ENCODE measurements at regions of chr2 and their contacts with region 1.

Region 1: GRCh38 chr2:16713011-16713423 is 47.4 kb upstream of the CYRIA start:
- DNase-seq: no peak
- ATAC-seq: peak; percentile 80
- H3K4me3 Mint-ChIP-seq: peak overlapping the region; percentile 72
- H3K27ac Mint-ChIP-seq: peak overlapping the region; percentile 90
- H3K4me1 Mint-ChIP-seq: peaks cover 58% of the 10 kb centered on the region
- H3K27me3 Mint-ChIP-seq: no peaks in the 10 kb centered on the region
- CTCF ChIP-seq: no peak

Region 2: GRCh38 chr2:16346671-16347070 is 366.3 kb before region 1 on chr2:
- CTCF ChIA-PET with region 1: no interaction called
- POLR2A ChIA-PET with region 1: no interaction called
- intact Hi-C with region 1: no loop called
- DNase-seq: no peak
- ATAC-seq: no peak
- H3K4me3 Mint-ChIP-seq: no peak overlapping the region
- H3K27ac Mint-ChIP-seq: no peak overlapping the region
- H3K4me1 Mint-ChIP-seq: no peaks in the 10 kb centered on the region
- H3K27me3 Mint-ChIP-seq: no peaks in the 10 kb centered on the region
- CTCF ChIP-seq: no peak

Region 3: DNA sequence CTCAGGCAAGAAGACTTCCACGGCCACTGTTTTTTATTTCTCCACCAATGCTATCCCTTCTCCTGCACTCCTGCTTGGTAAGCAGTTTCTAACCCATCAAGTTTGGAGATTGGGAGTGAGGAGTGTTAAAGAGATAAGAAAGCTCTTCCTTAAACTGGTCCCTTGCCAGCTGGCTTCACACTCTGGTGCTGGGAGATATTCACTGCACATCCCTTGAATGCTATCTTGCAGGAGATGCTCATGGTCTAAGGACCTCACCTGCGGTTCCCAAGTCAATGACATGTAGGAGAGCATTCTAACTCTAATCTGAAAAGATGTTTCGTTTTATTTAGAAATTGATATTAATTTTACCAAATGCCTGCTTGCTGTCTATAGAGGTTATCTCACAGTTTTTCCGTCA is 19.2 kb before region 1 on chr2:
- CTCF ChIA-PET with region 1: no interaction called
- POLR2A ChIA-PET with region 1: no interaction called
- intact Hi-C with region 1: loop called (anchors 2 kb)
- DNase-seq: no peak
- ATAC-seq: no peak
- H3K4me3 Mint-ChIP-seq: no peak overlapping the region
- H3K27ac Mint-ChIP-seq: no peak overlapping the region
- H3K4me1 Mint-ChIP-seq: peaks cover 9% of the 10 kb centered on the region
- H3K27me3 Mint-ChIP-seq: no peaks in the 10 kb centered on the region
- CTCF ChIP-seq: no peak

Region 4: DNA sequence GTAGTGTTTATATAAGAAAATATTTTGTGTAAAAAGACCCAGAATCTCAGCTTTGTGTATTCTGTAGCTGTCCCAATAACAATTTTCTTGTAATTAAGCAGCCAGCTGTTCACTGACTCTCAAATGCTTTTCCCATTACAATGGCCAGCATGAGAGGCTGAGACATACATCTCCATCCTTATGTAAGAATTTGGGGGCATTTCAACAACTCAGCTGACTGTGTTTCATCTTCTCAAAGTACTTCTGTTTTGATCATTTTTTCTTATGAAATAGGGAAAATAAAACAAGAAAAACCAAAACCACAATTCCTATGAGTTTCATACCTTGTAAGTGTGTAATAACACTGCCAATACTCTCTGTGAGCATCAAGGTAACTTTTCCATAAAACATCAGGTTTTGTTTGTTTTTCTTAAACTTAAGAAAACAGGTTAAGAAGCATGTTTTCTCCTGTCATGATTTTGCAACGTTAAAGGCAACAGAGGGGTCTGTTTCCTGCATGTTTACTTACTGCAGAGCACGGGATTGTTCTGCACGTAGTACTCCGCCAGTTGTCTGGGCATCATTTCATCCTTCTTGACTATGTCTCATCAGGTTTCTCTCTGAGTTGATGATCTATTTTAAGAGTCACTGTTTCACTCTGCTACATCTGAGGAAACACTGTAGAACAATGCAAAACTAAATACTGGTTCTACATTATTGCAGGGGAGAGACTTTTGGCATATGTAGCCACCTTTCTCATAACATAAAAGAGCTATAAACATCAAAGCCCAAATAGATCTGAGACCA is 15.5 kb after region 1 on chr2:
- CTCF ChIA-PET with region 1: no interaction called
- POLR2A ChIA-PET with region 1: interaction called, 4 read pairs
- intact Hi-C with region 1: loop called (anchors 1 kb)
- DNase-seq: no peak
- ATAC-seq: peak; percentile 35
- H3K4me3 Mint-ChIP-seq: peak overlapping the region; percentile 25
- H3K27ac Mint-ChIP-seq: peak overlapping the region; percentile 51
- H3K4me1 Mint-ChIP-seq: peaks cover 39% of the 10 kb centered on the region
- H3K27me3 Mint-ChIP-seq: no peaks in the 10 kb centered on the region
- CTCF ChIP-seq: no peak

Region 5: GRCh38 chr2:16840496-16841172 is 127.6 kb after region 1 on chr2:
- CTCF ChIA-PET with region 1: no interaction called
- POLR2A ChIA-PET with region 1: no interaction called
- intact Hi-C with region 1: no loop called
- DNase-seq: no peak
- ATAC-seq: no peak
- H3K4me3 Mint-ChIP-seq: no peak overlapping the region
- H3K27ac Mint-ChIP-seq: no peak overlapping the region
- H3K4me1 Mint-ChIP-seq: no peaks in the 10 kb centered on the region
- H3K27me3 Mint-ChIP-seq: peaks cover 12% of the 10 kb centered on the region
- CTCF ChIP-seq: no peak

Measured in activated B cell treated with CpG ODN at 0.5 μM for 24 hours (primary cell).